ENCODE measurements at regions of chr10 and their contacts with region 1.

Region 1: DNA sequence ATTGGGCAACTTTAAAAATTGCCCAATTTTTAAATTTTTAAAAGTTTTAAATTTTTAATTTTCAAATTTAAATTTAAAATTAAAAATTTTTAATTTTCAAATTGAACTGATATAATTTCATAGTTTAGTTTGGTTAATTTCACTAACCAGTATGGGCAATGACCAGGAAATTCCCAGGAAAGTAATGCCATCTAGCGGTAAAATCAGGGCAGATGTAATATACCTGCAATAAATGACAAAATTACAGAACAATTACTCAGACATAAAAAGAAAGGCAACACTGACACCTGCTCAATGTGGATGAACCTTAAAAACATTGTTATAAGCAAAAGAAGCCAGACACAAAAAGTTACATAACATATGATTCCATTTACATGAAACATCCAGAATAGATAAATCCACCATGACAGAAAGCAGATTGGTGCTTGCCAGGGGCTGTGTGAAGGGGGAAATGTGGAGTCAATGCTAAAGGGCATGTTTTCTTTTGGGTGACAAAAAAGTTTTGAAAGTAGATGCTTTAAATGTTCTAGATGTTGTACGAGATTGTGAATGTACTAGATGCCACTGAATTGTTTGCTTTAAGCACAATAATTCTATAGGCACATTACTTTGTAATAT is 28.6 kb upstream of the SLC16A12 start:
- DNase-seq: peak in 1 of 2 donors; percentile 17
- ATAC-seq: peak in 7 of 8 donors; percentile 55 to 80 (median 63)
- H3K4me3 ChIP-seq: no peak overlapping the region
- H3K27ac ChIP-seq: no peak overlapping the region
- H3K4me1 ChIP-seq: no peaks in the 10 kb centered on the region
- H3K27me3 ChIP-seq: peaks cover 0 to 7% (median 0%) of the 10 kb centered on the region in 7 donors
- CTCF ChIP-seq: peak; percentile 61 to 85 (median 79)

Region 2: DNA sequence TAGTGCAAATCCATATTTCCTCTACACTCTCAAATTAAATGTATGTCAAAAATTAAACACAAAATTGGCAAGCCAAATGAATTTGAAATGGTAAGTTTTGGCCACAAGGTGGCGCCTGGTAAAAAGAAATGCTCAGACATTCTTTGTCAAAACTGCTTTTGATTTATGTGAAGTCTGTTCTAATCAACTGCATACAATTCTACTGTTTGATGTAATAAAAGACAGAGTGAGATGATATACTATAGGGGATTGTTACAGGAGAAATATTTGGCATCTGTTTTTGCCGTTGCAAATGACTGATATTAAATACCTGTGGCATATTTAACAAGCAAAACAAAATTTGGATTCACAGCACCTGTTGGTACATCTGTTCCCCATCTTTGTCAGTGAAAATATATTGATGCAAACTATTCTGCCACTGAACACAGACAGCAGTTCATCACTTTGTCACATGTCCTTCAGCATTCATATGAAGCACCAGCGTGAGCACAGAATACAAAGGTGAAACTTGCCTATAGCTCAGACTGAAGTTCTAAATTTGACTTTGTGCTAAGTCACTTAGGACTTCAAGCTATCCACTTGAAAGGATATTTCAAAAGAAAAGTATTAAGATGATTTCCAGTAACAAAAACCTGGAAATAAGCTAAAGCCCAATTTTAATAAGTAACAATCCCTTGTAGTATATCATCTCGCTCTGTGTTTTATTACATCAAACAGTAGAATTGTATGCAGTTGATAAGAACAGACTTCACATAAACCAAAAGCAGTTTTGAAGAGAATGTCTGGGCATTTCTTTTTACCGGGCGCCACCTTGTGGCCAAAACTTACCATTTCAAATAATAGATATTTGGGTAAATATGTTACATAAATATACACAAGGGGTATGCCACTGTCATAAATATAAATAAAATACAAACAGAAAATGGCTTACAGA is 346.6 kb before region 1 on chr10:
- intact Hi-C with region 1: loop called in 3 of 10 experiments (anchors 5 kb)
- DNase-seq: peak in 1 of 2 donors; percentile 53
- ATAC-seq: peak in 3 of 8 donors; percentile 49 to 69 (median 55)
- H3K4me3 ChIP-seq: peak overlapping the region in 2 of 10 donors; percentile 3 to 4
- H3K27ac ChIP-seq: peak overlapping the region in 8 of 10 donors; percentile 10 to 61 (median 31)
- H3K4me1 ChIP-seq: peaks cover 0 to 16% (median 8%) of the 10 kb centered on the region in 9 donors
- H3K27me3 ChIP-seq: no peaks in the 10 kb centered on the region
- CTCF ChIP-seq: peak; percentile 72 to 87 (median 82)

Region 3: GRCh38 chr10:89251409-89252224 is 312.4 kb before region 1 on chr10 and contains the start of gene LIPA:
- intact Hi-C with region 1: loop called in 2 of 10 experiments (anchors 5 to 10 kb)
- DNase-seq: peak; percentile 95 to 96
- ATAC-seq: peak; percentile 99 to 100 (median 99)
- H3K4me3 ChIP-seq: peak within 1 kb of the TSS; percentile 79 to 99 (median 82)
- H3K27ac ChIP-seq: peak within 1 kb of the TSS; percentile 44 to 89 (median 82)
- H3K4me1 ChIP-seq: peaks cover 0 to 37% (median 8%) of the 10 kb centered on the region in 9 donors
- H3K27me3 ChIP-seq: no peaks in the 10 kb centered on the region
- CTCF ChIP-seq: no peak
- total RNA-seq, gene LIPA: 12.4 to 58.5 (median 15.3) TPM

Region 4: DNA sequence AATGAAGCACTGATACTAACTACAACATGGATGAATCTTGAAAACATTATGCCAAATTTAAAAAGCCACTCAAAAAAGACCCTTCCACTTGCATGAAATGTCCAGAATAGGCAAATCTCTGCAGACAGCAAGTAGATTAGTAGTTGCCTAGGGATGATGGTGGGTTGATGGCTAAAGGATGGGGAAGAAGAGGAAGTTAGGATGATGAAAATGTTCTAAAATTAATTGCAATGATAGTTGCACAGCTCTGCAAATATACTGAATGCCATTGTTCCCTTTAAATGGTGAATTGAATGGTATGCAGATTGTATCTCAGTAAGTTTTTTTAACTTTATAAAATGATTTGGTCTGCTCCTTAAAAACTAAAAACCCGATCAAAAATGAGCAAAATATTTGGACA is 305.1 kb before region 1 on chr10:
- intact Hi-C with region 1: loop called in 3 of 10 experiments (anchors 2 to 10 kb)
- DNase-seq: no peak
- ATAC-seq: no peak
- H3K4me3 ChIP-seq: no peak overlapping the region
- H3K27ac ChIP-seq: no peak overlapping the region
- H3K4me1 ChIP-seq: peaks cover 0 to 21% (median 8%) of the 10 kb centered on the region in 9 donors
- H3K27me3 ChIP-seq: no peaks in the 10 kb centered on the region
- CTCF ChIP-seq: no peak

Region 5: DNA sequence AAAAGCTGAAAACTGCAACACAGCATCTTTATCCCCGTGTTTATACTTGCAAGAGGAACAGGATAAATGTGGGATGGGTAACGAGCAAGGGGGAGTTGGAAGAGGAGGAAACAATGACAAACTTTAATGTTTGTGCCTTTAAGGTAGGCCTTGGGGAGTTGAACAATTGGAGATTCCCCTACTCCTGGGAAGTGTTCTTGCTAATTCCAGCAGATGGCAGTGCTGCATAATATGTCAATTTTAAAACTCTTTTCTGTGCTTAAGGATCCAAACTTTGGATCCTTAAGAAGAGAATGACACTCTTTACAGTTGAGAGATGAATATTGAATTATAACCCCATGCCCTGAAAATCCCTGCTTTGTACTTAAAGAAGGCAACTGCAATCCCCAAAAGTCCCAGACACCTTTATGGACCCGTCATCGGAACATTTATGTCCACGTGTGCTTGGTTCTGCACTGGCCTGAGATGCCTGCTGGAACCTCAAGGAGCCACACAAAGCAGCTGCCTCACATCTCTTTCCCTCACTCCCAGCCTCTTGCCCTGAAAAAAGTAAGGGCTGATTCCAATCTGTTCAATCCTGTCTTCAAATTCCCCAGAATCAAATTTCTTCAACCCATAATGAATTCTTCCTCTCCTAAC is 137.6 kb before region 1 on chr10:
- intact Hi-C with region 1: loop called (anchors 1 to 5 kb)
- DNase-seq: peak in 1 of 2 donors; percentile 44
- ATAC-seq: peak; percentile 50 to 87 (median 78)
- H3K4me3 ChIP-seq: no peak overlapping the region
- H3K27ac ChIP-seq: no peak overlapping the region
- H3K4me1 ChIP-seq: peaks cover 0 to 36% (median 4%) of the 10 kb centered on the region in 9 donors
- H3K27me3 ChIP-seq: no peaks in the 10 kb centered on the region
- CTCF ChIP-seq: peak; percentile 76 to 90 (median 84)

Region 6: GRCh38 chr10:89466599-89467035 is 97.4 kb before region 1 on chr10:
- intact Hi-C with region 1: loop called in 3 of 10 experiments (anchors 5 to 10 kb)
- DNase-seq: peak in 1 of 2 donors; percentile 14
- ATAC-seq: peak in 7 of 8 donors; percentile 59 to 72 (median 63)
- H3K4me3 ChIP-seq: no peak overlapping the region
- H3K27ac ChIP-seq: peak overlapping the region in 1 of 10 donors; percentile 29
- H3K4me1 ChIP-seq: peaks cover 0 to 32% (median 15%) of the 10 kb centered on the region in 9 donors
- H3K27me3 ChIP-seq: no peaks in the 10 kb centered on the region
- CTCF ChIP-seq: peak in 8 of 9 donors; percentile 19 to 57 (median 44)

Region 7: DNA sequence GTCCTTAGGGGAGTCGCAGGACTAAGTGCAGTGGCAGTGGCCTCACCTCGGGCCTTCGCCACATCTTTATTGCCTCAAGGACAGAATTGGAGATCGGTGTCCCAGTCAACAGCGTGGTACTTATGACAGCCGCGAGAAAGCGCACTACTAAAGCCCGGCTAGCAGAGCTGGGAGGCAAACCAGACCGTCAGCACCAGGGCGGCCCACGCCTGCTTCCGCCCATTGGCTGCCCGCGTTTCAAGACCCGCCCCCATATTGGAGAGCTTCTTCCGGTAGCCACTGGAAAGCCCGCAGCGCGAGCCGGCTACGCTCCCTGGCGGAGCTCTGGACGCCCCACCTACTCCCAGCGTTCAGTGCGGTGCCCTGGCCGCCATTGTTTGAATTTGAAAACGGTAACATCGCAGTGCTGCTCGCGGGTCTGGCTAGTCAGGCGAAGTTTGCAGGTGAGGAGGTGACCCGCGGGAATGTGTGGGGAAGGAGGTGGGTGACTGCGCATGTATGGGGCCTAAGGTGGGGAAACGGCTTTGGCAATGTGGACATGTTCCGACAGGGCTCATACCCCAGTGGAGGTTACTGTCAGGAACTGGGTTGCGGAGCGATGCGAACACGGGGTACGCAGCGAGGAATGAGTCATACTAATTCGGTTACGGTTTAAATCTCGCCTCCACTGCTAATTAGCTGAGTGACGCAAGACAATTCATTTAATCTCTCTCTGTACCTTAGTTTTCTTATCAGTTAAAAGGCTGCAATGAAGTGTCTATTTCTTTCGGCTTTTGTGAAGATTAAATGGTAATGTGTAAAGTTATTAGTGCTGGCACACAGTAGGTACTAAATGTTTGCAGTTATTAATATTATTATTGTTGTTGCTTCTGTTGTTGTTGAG is 137.5 kb after region 1 on chr10 and contains the start of gene KIF20B:
- intact Hi-C with region 1: loop called in 1 of 10 experiments (anchors 1 kb)
- DNase-seq: peak; percentile 95 to 96
- ATAC-seq: peak; percentile 100
- H3K4me3 ChIP-seq: peak within 1 kb of the TSS; percentile 53 to 77 (median 67)
- H3K27ac ChIP-seq: peak within 1 kb of the TSS; percentile 57 to 91 (median 83)
- H3K4me1 ChIP-seq: peaks cover 0 to 17% (median 12%) of the 10 kb centered on the region in 9 donors
- H3K27me3 ChIP-seq: no peaks in the 10 kb centered on the region
- CTCF ChIP-seq: peak in 8 of 9 donors; percentile 32 to 78 (median 54)
- total RNA-seq, gene KIF20B: 1.5 to 8.5 (median 3.2) TPM

Measured in heart right ventricle (tissue), 16 donors.